Posterior cingulate gyrus (tissue), 11 donors: ENCODE measurements at regions of chr10 and their contacts with region 1.

Region 1: GRCh38 chr10:125982260-125982948 is 86.0 kb downstream of the FANK1 start:
- DNase-seq: peak in 5 of 10 donors; percentile 13 to 85 (median 19)

Region 2: GRCh38 chr10:125961739-125962138 is 20.7 kb before region 1 on chr10:
- intact Hi-C with region 1: no loop called
- DNase-seq: no peak

Region 3: GRCh38 chr10:126302826-126303665 is 320.6 kb after region 1 on chr10:
- intact Hi-C with region 1: loop called (anchors 2 kb)
- DNase-seq: peak in 1 of 10 donors; percentile 16

Region 4: DNA sequence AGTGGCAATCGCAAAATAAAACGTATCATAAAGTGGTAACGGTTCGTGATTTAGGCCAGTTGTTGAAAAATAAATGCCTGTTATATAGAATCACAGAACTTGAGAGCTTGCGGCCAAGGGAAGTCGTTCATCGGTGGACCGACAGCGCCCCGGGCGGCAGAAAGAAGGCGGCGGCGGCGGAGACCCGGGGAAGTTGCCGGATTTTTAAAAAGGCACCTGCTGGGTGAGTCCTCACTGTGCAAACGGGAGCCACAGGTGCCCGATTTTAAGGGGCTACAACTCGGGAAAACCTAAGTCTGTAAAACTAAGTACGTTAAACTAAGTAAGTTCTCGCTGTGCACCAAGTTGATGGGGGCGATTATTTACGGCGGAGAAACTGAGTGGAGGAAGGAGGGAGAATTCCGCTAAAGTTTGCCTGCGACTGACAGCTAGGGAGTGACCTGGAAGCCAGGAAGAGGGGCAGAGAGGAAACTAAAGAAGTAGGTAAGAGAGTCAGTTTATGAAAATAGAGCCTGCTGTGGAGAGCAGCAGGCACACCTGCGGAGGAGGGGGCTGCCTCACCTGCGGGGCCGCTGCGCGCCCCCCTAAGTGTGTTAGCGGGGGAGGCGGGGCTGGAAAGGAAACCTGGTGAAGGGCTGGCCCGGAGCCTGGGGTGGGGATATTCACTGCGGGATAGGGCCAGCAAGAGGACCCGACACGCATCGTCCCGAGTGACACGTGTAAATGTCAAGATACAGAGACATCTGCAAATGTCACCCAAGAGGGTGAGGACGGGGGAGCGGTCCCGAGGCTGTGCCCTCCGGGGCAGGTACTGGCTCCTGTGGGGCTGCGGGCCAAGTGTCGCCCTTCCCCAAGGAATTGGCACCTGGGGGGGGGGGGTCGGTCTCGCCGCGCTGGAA is 404.9 kb after region 1 on chr10:
- intact Hi-C with region 1: loop called (anchors 1 kb)
- DNase-seq: peak; percentile 52 to 96 (median 76)

Region 5: DNA sequence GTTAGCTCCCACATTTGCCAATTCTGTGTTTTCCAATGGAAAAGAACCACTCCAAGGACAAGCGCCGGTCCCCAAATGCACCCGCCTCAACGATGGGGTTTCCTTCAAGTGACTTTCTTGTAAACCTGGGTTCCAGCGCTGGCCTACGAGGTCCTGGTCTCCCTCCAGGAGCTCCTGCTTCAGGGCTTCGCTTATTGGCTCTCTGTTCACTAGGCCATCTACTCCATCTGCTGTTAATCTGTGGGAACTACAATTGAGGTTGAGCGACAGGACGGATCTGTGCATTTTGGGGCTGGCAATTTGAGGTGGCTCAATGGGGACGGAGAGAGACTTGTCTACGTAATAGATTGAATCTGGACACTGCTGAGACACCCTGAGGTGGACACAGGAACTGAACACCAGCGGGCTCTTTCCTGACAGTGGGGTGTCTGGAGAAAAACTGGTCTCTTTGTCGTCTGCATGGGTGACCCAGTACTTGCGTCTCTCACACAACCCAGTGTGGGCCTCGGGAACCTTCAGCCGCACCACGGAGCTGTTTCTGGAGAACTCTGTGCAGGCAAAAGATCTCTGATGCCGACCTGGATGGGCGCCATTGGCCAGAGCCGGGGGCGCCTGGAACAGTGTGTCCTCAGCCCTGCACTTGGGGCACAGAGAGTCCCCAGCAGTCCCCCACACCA is 521.8 kb after region 1 on chr10:
- intact Hi-C with region 1: loop called (anchors 5 kb)
- DNase-seq: peak in 4 of 10 donors; percentile 10 to 88 (median 26)

Region 6: GRCh38 chr10:126749015-126749655 is 766.7 kb after region 1 on chr10:
- intact Hi-C with region 1: loop called (anchors 10 kb)
- DNase-seq: peak; percentile 27 to 96 (median 81)

Region 7: DNA sequence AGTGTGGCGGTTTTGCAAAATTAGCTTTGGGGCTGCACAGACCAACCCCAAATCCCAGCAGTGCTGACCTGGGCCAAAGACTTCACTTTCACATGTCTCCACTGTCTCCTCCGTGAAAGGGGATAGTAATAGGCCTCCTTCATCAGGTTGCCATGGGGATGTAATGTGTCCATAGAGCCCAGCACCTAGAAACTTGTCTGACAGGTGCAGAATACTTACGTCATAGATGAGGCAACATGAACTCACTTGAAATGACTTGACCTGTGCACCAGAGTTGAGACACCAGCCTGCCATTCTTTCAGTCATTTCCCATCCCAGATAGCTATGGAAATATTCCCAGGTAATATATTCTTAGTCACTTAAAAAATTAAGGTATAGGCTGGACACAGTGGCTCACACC is 1119.8 kb after region 1 on chr10:
- intact Hi-C with region 1: no loop called
- DNase-seq: no peak